MCF 10A (cell line): ENCODE measurements at regions of chr7 and their contacts with region 1.

Region 1: DNA sequence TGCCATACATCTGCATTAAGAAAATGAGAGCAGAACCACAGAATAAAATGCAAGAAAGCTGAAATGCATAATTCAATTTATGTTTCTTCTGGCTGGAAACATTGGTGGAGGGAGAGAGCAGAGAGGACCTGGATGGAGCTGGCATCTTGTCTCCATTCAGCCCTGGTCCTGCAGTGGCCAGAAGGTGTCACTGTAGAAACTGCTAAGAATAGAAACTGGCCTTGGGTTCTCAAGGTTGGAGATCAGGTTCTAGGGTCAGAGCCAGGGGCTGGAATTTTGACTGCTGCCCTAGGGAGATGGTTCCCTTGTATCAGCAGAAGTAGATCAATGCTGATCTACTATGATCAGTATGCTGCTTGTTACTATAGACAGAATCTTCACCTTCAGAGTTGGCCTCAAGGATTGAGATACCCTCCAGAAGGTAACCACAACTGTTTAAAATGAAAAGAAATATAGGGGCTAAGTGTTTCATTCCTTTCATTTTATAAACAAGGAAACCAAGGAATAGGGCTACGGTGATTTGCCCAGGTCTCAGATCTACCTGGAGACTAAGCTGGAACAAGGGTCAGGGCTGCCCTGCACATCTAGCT is 13.1 kb downstream of the TAS2R41 start:
- DNase-seq: peak; percentile 54
- H3K4me3 Mint-ChIP-seq: no peak overlapping the region
- H3K27ac Mint-ChIP-seq: no peak overlapping the region
- H3K4me1 Mint-ChIP-seq: peaks cover 12% of the 10 kb centered on the region
- H3K27me3 Mint-ChIP-seq: no peaks in the 10 kb centered on the region
- CTCF ChIP-seq: peak; percentile 42

Region 2: GRCh38 chr7:143479055-143479766 is 11.6 kb before region 1 on chr7:
- CTCF ChIA-PET with region 1: interaction called, 18 read pairs
- POLR2A ChIA-PET with region 1: no interaction called
- intact Hi-C with region 1: no loop called
- DNase-seq: no peak
- H3K4me3 Mint-ChIP-seq: no peak overlapping the region
- H3K27ac Mint-ChIP-seq: no peak overlapping the region
- H3K4me1 Mint-ChIP-seq: no peaks in the 10 kb centered on the region
- H3K27me3 Mint-ChIP-seq: no peaks in the 10 kb centered on the region
- CTCF ChIP-seq: no peak

Region 3: GRCh38 chr7:143514995-143515735 is 24.4 kb after region 1 on chr7:
- CTCF ChIA-PET with region 1: interaction called, 20 read pairs
- POLR2A ChIA-PET with region 1: interaction called, 7 read pairs
- intact Hi-C with region 1: no loop called
- DNase-seq: no peak
- H3K4me3 Mint-ChIP-seq: no peak overlapping the region
- H3K27ac Mint-ChIP-seq: no peak overlapping the region
- H3K4me1 Mint-ChIP-seq: peaks cover 8% of the 10 kb centered on the region
- H3K27me3 Mint-ChIP-seq: no peaks in the 10 kb centered on the region
- CTCF ChIP-seq: no peak